Activated naive CD4-positive, alpha-beta T cell treated with anti-CD3 and anti-CD28 coated beads for 36 hours (primary cell): ENCODE measurements at regions of chrX and their contacts with region 1.

Region 1: GRCh38 chrX:78517124-78517523 is 142.0 kb downstream of the RTL3 start:
- DNase-seq: peak; percentile 76
- H3K4me3 Mint-ChIP-seq: no peak overlapping the region
- H3K27ac Mint-ChIP-seq: peak overlapping the region; percentile 86
- H3K4me1 Mint-ChIP-seq: peaks cover 40% of the 10 kb centered on the region
- H3K27me3 Mint-ChIP-seq: no peaks in the 10 kb centered on the region

Region 2: GRCh38 chrX:77910108-77910840 is 606.9 kb before region 1 on chrX and contains the start of gene ATP7A:
- CTCF ChIA-PET with region 1: no interaction called
- intact Hi-C with region 1: loop called (anchors 2 kb)
- DNase-seq: peak; percentile 93
- H3K4me3 Mint-ChIP-seq: peak within 1 kb of the TSS; percentile 97
- H3K27ac Mint-ChIP-seq: peak within 1 kb of the TSS; percentile 96
- H3K4me1 Mint-ChIP-seq: peaks cover 12% of the 10 kb centered on the region
- H3K27me3 Mint-ChIP-seq: no peaks in the 10 kb centered on the region
- total RNA-seq, gene ATP7A: 5.3 to 5.5 TPM

Region 3: GRCh38 chrX:78119521-78120227 is 397.4 kb before region 1 on chrX:
- CTCF ChIA-PET with region 1: no interaction called
- intact Hi-C with region 1: loop called (anchors 5 kb)
- DNase-seq: peak; percentile 9
- H3K4me3 Mint-ChIP-seq: no peak overlapping the region
- H3K27ac Mint-ChIP-seq: peak overlapping the region; percentile 71
- H3K4me1 Mint-ChIP-seq: peaks cover 57% of the 10 kb centered on the region
- H3K27me3 Mint-ChIP-seq: no peaks in the 10 kb centered on the region

Region 4: GRCh38 chrX:78527263-78527662 is 10.1 kb after region 1 on chrX:
- CTCF ChIA-PET with region 1: no interaction called
- intact Hi-C with region 1: loop called (anchors 1 kb)
- DNase-seq: peak; percentile 32
- H3K4me3 Mint-ChIP-seq: no peak overlapping the region
- H3K27ac Mint-ChIP-seq: peak overlapping the region; percentile 50
- H3K4me1 Mint-ChIP-seq: peaks cover 13% of the 10 kb centered on the region
- H3K27me3 Mint-ChIP-seq: no peaks in the 10 kb centered on the region

Region 5: DNA sequence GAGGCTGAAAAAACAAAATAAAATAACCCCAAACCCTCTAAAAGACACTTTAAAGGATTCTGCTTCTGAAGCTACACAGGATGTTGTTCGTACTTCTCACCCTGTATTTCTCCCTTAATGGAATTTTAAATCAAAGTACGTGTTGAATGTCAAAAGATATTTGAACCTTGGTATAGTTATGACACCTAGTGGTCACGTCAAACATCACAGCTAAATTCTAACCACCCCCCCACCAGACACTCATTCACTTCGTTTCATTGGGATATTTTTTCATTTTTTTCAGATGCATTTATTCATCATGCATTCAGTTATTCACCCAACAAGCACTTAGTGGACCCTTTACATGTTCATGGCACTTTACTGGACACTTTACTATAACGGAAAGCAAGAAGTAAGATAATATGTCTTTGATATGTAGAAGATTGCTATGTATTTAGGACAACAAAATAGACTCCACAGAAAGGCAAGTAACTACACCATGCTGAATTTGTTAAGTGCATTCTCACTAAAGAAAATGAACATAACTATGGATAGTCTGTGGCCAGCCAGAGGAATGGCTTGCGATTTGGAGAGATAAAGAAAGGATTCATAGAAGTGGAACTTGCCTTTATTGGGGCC is 564.9 kb after region 1 on chrX:
- CTCF ChIA-PET with region 1: no interaction called
- intact Hi-C with region 1: loop called (anchors 5 kb)
- DNase-seq: peak; percentile 55
- H3K4me3 Mint-ChIP-seq: peak overlapping the region; percentile 65
- H3K27ac Mint-ChIP-seq: peak overlapping the region; percentile 81
- H3K4me1 Mint-ChIP-seq: peaks cover 41% of the 10 kb centered on the region
- H3K27me3 Mint-ChIP-seq: no peaks in the 10 kb centered on the region

Region 6: DNA sequence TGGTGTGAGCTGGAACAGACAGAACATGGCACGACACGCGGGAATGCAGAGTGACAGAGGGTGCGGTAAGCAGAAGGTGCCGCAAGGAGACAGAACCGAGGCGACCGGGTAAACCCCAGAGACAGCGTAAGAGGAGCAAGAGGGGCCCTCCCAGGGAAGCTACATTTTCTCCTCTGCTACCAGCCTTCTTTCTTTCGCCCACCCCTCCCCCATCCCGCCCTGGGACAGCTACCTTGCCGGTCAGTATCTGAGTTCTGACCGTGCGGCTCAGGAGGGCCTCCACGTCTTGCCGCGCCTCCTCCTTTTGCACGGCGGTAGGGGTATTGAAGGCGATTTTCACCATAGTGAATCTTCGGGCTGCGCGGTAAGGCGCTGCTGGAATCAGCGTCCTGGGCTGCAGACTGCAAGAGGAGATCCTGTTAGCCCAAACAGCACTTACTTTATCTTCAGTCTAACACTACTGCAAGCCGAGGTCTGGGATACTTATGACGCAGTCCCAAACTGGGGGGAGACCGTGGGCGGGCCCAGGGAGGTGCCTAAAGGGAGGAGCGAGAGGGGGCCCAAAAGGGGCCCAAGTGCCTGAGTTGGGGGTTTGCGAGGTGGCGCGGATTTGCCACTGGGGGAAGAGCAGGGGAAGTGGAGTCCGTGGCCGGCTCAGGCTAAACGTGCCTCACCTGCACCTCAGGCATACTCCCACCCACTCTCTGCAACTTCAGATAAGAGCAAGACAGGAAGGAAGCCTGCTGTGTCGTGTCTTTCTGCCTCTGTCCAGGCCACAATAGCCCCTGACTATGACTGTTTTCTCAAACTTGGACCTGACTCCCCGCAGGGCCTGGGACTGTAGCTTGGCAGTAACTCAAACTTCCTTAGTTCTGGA is 850.0 kb after region 1 on chrX and contains the start of gene ITM2A:
- CTCF ChIA-PET with region 1: no interaction called
- intact Hi-C with region 1: loop called (anchors 5 kb)
- DNase-seq: peak; percentile 76
- H3K4me3 Mint-ChIP-seq: peak within 1 kb of the TSS; percentile 86
- H3K27ac Mint-ChIP-seq: peak within 1 kb of the TSS; percentile 93
- H3K4me1 Mint-ChIP-seq: peaks cover 39% of the 10 kb centered on the region
- H3K27me3 Mint-ChIP-seq: no peaks in the 10 kb centered on the region
- total RNA-seq, gene ITM2A: 99.5 to 116 TPM